MCF 10A (cell line): ENCODE measurements at regions of chr6 and their contacts with region 1.

Region 1: GRCh38 chr6:149840345-149841075 is 23.6 kb downstream of the LRP11 start:
- DNase-seq: peak; percentile 79
- H3K4me3 Mint-ChIP-seq: no peak overlapping the region
- H3K27ac Mint-ChIP-seq: no peak overlapping the region
- H3K4me1 Mint-ChIP-seq: peaks cover 14% of the 10 kb centered on the region
- H3K27me3 Mint-ChIP-seq: no peaks in the 10 kb centered on the region
- CTCF ChIP-seq: peak; percentile 76

Region 2: DNA sequence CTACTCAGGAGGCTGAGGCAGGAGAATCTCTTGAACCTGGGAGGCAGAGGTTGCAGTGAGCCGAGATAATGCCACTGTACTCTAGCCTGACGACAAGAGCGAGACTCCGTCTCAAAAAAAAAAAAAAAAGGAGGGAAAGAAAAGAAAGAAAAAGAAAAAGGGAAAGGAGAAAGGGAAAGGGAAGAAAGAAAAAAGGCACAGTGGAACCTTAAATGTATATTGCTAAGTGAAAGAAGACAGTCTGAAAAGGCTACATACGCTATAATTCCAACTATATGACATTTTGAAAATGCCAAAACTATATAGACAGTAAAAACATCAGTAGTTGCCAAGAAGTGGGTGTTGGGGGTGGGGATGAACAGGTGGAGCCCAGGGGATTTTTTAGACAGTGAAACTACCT is 310.9 kb before region 1 on chr6:
- CTCF ChIA-PET with region 1: no interaction called
- POLR2A ChIA-PET with region 1: no interaction called
- intact Hi-C with region 1: no loop called
- DNase-seq: no peak
- H3K4me3 Mint-ChIP-seq: no peak overlapping the region
- H3K27ac Mint-ChIP-seq: no peak overlapping the region
- H3K4me1 Mint-ChIP-seq: no peaks in the 10 kb centered on the region
- H3K27me3 Mint-ChIP-seq: no peaks in the 10 kb centered on the region
- CTCF ChIP-seq: no peak

Region 3: GRCh38 chr6:149890629-149891045 is 50.1 kb after region 1 on chr6:
- CTCF ChIA-PET with region 1: interaction called, 14 read pairs
- POLR2A ChIA-PET with region 1: interaction called, 49 read pairs
- intact Hi-C with region 1: loop called (anchors 2 kb)
- DNase-seq: peak; percentile 79
- H3K4me3 Mint-ChIP-seq: peak overlapping the region; percentile 62
- H3K27ac Mint-ChIP-seq: peak overlapping the region; percentile 69
- H3K4me1 Mint-ChIP-seq: peaks cover 57% of the 10 kb centered on the region
- H3K27me3 Mint-ChIP-seq: no peaks in the 10 kb centered on the region
- CTCF ChIP-seq: no peak

Region 4: DNA sequence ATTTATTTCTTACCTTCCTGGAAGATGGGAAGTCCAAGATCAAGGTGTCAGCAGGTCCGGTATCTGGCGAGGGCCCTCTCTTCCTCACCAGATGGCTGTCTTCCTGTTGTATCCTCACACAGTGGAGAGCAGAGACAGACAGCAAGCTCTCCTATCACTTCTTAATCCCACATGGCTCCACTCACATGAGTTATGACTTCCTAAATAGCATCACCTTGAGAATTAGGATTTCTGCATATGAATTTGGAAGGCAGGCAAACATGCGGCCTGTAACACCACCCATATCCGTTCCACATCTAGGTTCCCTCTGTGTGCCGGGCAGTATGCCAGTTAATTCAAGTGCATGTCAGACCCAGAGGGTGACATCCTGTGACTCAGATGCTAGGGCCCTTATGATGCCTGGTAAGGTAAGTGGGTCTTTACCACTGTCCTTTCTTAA is 55.3 kb after region 1 on chr6:
- CTCF ChIA-PET with region 1: interaction called, 14 read pairs
- POLR2A ChIA-PET with region 1: interaction called, 10 read pairs
- intact Hi-C with region 1: loop called (anchors 2 kb)
- DNase-seq: peak; percentile 92
- H3K4me3 Mint-ChIP-seq: peak overlapping the region; percentile 41
- H3K27ac Mint-ChIP-seq: peak overlapping the region; percentile 85
- H3K4me1 Mint-ChIP-seq: peaks cover 69% of the 10 kb centered on the region
- H3K27me3 Mint-ChIP-seq: no peaks in the 10 kb centered on the region
- CTCF ChIP-seq: no peak

Region 5: GRCh38 chr6:150037526-150038201 is 197.2 kb after region 1 on chr6:
- CTCF ChIA-PET with region 1: no interaction called
- POLR2A ChIA-PET with region 1: no interaction called
- intact Hi-C with region 1: no loop called
- DNase-seq: no peak
- H3K4me3 Mint-ChIP-seq: peak overlapping the region; percentile 30
- H3K27ac Mint-ChIP-seq: no peak overlapping the region
- H3K4me1 Mint-ChIP-seq: no peaks in the 10 kb centered on the region
- H3K27me3 Mint-ChIP-seq: peaks cover 65% of the 10 kb centered on the region
- CTCF ChIP-seq: no peak

Region 6: GRCh38 chr6:150129616-150130422 is 289.3 kb after region 1 on chr6:
- CTCF ChIA-PET with region 1: no interaction called
- POLR2A ChIA-PET with region 1: no interaction called
- intact Hi-C with region 1: no loop called
- DNase-seq: no peak
- H3K4me3 Mint-ChIP-seq: no peak overlapping the region
- H3K27ac Mint-ChIP-seq: no peak overlapping the region
- H3K4me1 Mint-ChIP-seq: no peaks in the 10 kb centered on the region
- H3K27me3 Mint-ChIP-seq: no peaks in the 10 kb centered on the region
- CTCF ChIP-seq: no peak